ENCODE measurements at regions of chr6 and their contacts with region 1.

Region 1: GRCh38 chr6:7312616-7313504 is at the start of gene SSR1:
- DNase-seq: peak; percentile 77 to 96 (median 90)
- ATAC-seq: peak; percentile 95
- H3K4me3 ChIP-seq: peak within 1 kb of the TSS; percentile 94
- H3K4me3 Mint-ChIP-seq: peak within 1 kb of the TSS; percentile 95
- H3K27ac ChIP-seq: peak within 1 kb of the TSS; percentile 74 to 75
- H3K27ac Mint-ChIP-seq: peak within 1 kb of the TSS; percentile 86
- H3K4me1 ChIP-seq: peaks cover 20% of the 10 kb centered on the region
- H3K4me1 Mint-ChIP-seq: peaks cover 53% of the 10 kb centered on the region
- H3K27me3 ChIP-seq: no peaks in the 10 kb centered on the region
- H3K27me3 Mint-ChIP-seq: no peaks in the 10 kb centered on the region
- CTCF ChIP-seq: no peak
- total RNA-seq, gene SSR1: 49.6 to 55.1 TPM

Region 2: DNA sequence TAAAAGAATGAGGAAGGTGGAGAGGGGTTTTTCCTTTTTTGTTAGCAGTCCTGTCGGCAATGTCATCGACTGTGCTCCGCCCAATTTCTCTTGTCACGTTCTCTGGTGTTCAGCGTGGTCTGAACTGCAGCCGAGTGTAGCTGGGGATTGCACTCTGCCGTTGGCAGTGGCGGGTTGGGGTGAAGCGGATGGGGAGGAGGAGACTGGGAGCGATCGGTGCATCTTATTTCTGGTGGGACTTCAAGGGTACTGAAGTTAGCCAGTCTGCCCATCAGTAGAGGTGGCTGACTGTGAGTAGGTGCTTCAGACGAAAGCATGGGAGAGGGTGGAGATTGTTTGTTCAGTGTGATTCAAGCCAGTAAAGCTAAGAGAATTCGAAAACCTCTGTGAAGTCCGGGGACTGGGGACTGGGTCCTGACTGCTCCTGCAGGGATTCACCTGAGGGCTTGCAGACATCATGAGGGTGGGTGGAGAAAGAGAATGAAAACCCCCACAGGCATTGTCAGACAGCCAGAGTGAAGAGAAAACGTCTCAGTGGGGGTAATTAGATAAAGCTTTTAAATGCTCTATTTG is 200.0 kb before region 1 on chr6:
- CTCF ChIA-PET with region 1: no interaction called
- POLR2A ChIA-PET with region 1: no interaction called
- intact Hi-C with region 1: loop called in 1 of 2 experiments (anchors 10 kb)
- DNase-seq: peak in 13 of 14 experiments; percentile 22 to 84 (median 53)
- ATAC-seq: peak; percentile 70
- H3K4me3 ChIP-seq: no peak overlapping the region
- H3K4me3 Mint-ChIP-seq: peak overlapping the region; percentile 88
- H3K27ac ChIP-seq: peak overlapping the region in 1 of 2 donors; percentile 33
- H3K27ac Mint-ChIP-seq: peak overlapping the region; percentile 87
- H3K4me1 ChIP-seq: peaks cover 45% of the 10 kb centered on the region
- H3K4me1 Mint-ChIP-seq: peaks cover 76% of the 10 kb centered on the region
- H3K27me3 ChIP-seq: no peaks in the 10 kb centered on the region
- H3K27me3 Mint-ChIP-seq: no peaks in the 10 kb centered on the region
- CTCF ChIP-seq: no peak

Region 3: DNA sequence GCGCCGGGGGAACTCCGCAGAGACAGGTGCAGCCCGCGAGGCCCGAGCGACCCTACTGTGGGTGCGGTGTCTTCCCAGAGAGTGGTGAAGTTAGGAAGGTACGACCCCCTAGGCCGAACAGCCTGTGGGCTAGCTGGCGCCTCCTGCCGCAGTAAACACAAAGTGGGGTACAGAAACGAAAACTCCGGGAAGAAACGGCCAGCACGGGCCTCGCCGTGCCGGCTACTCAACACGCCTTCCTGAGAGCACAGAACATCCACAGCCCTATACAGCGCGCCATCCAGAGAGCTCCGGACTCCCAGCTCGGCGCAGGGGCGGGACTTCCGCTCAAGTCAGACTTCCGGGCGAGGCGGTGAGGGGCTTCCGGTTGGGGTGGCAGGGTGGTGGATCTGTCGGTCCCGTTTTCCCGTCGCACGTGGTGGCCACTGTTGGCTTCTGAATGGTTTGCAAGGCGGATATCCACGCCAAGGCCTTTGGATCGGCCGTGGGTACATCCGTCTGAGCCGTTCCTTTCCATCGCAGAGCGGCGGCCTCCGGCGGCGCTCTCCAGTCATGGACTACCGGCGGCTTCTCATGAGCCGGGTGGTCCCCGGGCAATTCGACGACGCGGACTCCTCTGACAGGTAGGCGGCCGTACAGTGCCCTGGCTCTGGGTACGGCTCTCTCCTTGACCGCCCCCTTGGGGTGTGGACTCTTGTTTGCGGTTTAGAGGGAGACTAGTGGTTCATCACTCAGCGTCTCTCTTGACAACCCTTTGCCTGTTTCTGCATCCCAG is 76.8 kb after region 1 on chr6 and contains the starts of genes CAGE1 and RIOK1:
- CTCF ChIA-PET with region 1: interaction called, 11 read pairs
- POLR2A ChIA-PET with region 1: interaction called, 48 read pairs
- intact Hi-C with region 1: loop called (anchors 1 to 2 kb)
- DNase-seq: peak; percentile 89 to 97 (median 92)
- ATAC-seq: peak; percentile 88
- H3K4me3 ChIP-seq: peak within 1 kb of the TSS; percentile 80
- H3K4me3 Mint-ChIP-seq: peak within 1 kb of the TSS; percentile 93
- H3K27ac ChIP-seq: peak within 1 kb of the TSS; percentile 98 to 99
- H3K27ac Mint-ChIP-seq: peak within 1 kb of the TSS; percentile 98
- H3K4me1 ChIP-seq: peaks cover 28% of the 10 kb centered on the region
- H3K4me1 Mint-ChIP-seq: peaks cover 43% of the 10 kb centered on the region
- H3K27me3 ChIP-seq: no peaks in the 10 kb centered on the region
- H3K27me3 Mint-ChIP-seq: no peaks in the 10 kb centered on the region
- CTCF ChIP-seq: no peak
- total RNA-seq, gene CAGE1: 0.38 to 0.39 TPM
- total RNA-seq, gene RIOK1: 25.5 to 28.1 TPM

Region 4: DNA sequence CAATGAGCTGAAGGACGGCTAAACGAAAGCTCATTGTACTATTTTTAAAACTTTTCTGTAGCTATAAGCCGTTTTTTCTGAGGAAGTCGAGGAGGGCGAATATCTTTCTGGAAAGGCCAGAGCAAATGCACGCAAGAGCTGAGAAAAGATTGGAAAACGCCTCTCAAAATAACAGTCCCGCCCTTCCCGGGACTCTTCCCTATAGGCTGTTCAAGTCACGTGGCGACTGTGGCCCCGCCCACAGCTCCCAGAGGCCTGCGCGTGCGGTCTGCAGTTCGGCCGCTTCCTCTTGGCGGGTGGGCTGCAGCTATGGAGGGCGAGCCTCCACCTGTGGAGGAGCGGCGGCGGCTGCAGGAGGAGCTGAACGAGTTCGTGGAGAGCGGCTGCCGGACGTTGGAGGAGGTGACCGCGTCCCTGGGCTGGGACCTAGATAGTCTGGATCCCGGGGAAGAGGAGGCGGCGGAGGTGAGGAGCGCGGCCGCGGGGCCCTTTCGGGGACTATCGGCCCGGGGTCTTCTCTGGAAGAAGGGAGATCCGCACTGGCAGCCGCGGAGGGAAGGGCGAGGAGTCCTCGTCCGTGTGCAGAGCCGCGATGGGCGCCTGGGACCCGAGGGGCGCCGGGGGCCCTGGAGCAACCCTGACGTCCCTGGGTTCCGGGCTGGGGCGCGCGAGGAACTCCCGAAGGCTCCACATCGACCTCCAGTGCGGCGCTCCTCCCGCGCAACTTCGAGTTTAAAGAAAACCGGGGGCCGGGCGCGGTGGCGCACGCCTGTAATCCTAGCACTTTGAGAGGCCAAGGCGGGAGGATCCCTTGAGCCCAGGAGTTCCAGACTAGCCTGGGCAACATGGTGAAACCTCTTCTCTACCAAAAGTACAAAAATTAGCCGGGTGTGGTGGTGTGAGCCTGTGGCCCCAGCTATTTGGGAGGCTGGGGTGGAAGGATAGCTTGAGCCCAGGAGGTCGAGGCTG is 277.4 kb after region 1 on chr6 and contains the start of gene SNRNP48:
- CTCF ChIA-PET with region 1: no interaction called
- POLR2A ChIA-PET with region 1: interaction called, 6 read pairs
- intact Hi-C with region 1: loop called in 1 of 2 experiments (anchors 2 kb)
- DNase-seq: peak; percentile 79 to 94 (median 88)
- ATAC-seq: peak; percentile 98
- H3K4me3 ChIP-seq: peak within 1 kb of the TSS; percentile 96
- H3K4me3 Mint-ChIP-seq: peak within 1 kb of the TSS; percentile 100
- H3K27ac ChIP-seq: peak within 1 kb of the TSS; percentile 38 to 45
- H3K27ac Mint-ChIP-seq: peak within 1 kb of the TSS; percentile 91
- H3K4me1 ChIP-seq: peaks cover 15% of the 10 kb centered on the region
- H3K4me1 Mint-ChIP-seq: peaks cover 48% of the 10 kb centered on the region
- H3K27me3 ChIP-seq: no peaks in the 10 kb centered on the region
- H3K27me3 Mint-ChIP-seq: no peaks in the 10 kb centered on the region
- CTCF ChIP-seq: no peak
- total RNA-seq, gene SNRNP48: 12.1 to 13.4 TPM

Region 5: DNA sequence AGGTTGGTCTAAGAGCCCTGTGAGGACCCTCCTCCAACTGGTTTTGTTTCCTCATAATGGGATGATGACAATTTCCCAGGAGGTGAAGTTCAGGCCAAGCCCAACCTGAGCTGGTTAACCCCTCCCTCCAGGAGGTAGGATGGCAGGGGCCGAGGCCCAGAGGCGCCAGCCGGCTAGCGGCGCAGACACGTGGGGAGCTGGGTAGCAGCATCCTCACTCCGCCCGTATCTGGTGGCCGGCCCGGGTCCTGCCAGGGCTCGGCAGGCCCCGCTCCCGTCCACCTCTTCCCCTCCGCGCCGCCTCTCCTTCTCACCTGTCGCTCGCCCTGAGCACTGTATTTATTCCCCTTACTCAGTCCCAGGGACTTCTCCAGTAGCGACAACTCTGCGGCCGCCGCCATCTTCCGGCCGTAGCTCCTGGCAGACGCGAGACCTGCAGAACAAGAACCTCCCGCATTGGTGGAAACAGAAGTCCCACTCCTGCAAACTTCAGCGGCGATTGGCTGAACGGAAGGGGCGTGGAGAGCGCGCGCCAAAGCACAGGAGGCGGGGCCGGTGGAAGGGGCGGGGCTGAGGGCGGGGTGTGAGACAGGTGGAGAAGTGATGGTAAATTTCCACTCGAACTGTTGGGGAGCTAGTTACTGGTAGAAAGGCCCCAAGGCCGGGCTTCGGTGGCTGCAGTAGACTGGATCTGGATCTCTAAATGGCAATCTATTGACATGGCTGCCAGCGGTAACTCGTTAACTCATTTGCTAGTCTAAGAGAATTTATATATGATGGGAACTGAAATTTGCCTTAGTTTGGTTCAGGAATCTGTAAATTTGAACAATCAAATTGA is 789.5 kb after region 1 on chr6 and contains the start of gene EEF1E1:
- CTCF ChIA-PET with region 1: no interaction called
- POLR2A ChIA-PET with region 1: no interaction called
- intact Hi-C with region 1: loop called in 1 of 2 experiments (anchors 10 kb)
- DNase-seq: peak; percentile 93 to 99 (median 97)
- ATAC-seq: peak; percentile 97
- H3K4me3 ChIP-seq: peak within 1 kb of the TSS; percentile 89
- H3K4me3 Mint-ChIP-seq: peak within 1 kb of the TSS; percentile 96
- H3K27ac ChIP-seq: peak within 1 kb of the TSS; percentile 69 to 73
- H3K27ac Mint-ChIP-seq: peak within 1 kb of the TSS; percentile 81
- H3K4me1 ChIP-seq: peaks cover 20% of the 10 kb centered on the region
- H3K4me1 Mint-ChIP-seq: peaks cover 31% of the 10 kb centered on the region
- H3K27me3 ChIP-seq: no peaks in the 10 kb centered on the region
- H3K27me3 Mint-ChIP-seq: peaks cover 25% of the 10 kb centered on the region
- CTCF ChIP-seq: no peak
- total RNA-seq, gene EEF1E1: 11.2 to 14.7 TPM